ENCODE measurements at regions of chr1 and their contacts with region 1.

Region 1: DNA sequence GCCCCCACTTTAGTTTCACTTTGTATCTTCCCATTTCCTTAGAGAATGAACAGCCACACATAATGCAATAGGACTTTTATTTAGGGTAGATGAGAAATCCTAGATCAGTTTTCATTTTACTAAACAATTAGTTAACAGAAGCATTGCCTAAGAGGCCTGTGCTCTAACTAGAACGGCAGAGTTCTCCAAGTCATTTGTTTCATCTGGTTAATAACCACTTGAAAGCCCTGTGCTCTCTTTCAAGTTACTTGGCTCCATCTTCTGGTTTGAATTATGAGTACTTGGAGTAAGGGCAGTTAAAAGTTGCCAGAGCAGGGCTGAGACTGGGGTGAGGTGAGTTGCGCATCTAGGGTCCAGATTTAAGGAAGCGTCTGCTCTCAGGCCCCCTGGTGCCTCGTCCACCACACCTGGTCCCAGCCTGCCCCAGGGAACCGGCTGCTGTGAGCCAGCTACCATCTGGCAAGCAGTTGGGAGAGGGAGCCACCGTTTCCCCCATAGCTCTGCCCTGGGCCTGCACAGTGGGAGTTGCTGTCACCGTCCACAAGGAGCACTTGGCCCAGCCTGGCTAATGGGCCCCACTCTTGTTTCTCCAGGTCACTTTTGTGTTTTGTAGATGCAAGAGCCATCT is 18.1 kb upstream of the SLC44A3 start:
- DNase-seq: peak; percentile 45
- CTCF ChIP-seq: peak; percentile 56

Region 2: DNA sequence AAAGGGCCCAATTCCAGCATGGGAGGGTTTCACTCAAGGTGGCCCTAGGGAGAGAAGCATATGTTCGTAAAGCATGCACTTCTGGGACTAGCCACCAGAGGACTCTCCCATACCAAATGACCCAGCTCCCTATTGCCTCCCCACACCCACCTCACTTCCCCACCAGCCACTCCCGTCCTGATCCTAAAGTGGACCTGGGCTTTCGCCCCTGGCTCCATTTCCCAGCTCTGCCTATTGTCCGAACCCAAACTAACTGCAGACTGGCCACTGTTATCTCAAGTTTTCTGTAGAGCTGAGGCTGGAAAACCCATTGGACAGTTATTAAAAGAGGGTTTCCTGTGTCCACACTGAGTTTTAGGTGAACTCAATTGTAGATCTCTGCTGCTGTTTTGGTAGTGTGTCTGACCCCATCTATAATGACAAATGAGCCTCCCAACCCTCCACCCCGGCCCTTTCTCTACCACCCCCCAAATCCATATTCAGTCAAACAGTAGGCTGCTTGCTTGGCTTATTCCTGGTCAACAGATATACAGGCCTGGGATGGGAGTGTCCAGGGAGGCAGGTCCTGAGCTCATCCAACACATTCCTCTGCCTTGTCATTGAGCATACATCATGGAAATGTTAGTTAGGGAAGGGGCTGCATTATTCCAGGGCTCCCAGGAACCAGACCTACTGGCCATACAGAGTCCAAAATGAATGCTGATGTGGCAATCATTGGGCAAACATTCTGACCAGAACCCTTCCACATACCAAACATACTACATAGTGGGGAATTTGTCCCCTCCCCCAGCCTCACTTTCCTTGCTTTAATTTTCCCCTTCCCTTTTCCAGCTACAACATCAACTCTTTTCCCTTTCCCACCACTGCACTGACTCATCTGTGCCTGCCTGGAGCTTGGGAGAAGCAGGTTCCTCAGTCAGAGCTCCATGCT is 740.3 kb before region 1 on chr1:
- in situ Hi-C with region 1: loop called (anchors 25 kb)
- DNase-seq: peak; percentile 68
- CTCF ChIP-seq: peak; percentile 84

Region 3: DNA sequence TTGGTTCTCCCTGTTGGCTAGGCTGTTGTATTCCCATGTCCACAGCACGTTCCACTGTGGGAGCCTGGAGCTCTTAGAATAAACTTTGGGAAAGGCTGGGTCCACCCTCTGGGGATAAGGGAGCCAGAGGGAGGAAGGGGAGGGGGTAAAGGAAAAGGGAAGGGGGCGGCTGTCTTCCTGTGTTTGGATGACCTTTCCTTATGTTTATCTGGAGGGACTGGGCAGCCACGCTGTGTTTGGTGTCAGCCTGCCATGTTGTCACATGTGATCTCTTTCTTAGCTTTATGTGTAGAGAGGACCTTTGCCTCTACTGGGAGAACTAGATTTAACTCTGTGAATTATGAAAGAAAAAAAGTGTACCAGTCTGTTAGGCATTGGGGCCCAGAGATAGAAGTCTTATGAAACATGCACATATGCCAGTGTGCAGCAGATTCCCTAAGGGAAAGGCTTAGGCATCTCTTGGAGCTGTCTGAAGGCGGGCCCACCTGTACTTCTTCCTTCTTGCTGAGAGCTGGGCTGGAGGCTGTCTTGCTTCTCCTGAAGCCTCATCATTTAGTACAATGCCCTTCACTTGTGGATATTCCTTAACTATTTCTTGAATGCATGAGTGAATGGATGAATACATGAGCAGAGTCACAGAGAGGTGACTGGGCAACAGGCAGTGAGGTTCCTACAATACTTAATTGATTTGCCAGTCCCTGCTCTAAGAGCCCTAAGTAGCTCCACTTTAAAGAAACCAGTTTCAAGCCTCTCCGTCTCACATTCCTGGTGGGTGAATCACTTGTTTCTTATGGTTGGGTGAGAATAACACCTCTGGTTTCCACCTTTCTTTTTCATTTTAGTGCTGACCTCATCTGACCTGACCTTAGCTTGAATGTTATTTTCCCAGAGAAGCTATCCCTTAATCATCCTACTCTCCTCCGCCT is 502.1 kb before region 1 on chr1:
- in situ Hi-C with region 1: no loop called
- DNase-seq: no peak
- CTCF ChIP-seq: no peak

Region 4: GRCh38 chr1:94335950-94336349 is 466.1 kb before region 1 on chr1:
- in situ Hi-C with region 1: loop called (anchors 25 kb)
- DNase-seq: peak; percentile 34
- CTCF ChIP-seq: peak; percentile 78

Region 5: GRCh38 chr1:94471271-94471670 is 330.8 kb before region 1 on chr1:
- in situ Hi-C with region 1: loop called (anchors 10 kb)
- DNase-seq: no peak
- CTCF ChIP-seq: no peak

Region 6: DNA sequence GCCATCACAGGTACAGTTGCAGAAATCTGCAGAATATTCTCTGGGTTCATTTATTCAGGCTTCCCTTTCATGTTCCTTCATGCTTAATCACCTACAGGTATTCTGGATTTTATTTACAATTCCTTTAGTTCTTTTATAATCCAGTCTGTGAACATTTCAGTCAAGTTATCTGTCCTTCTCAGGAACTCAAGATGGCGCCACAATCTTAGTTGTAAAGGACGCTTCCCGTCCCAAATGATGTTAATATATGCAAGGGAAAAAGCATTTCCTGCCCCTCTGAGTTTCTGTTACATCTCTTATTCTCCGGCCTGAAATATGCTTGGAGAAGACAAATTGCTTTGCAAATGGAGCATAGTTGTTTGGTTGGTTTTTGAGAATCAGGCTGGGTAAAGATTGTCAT is 279.7 kb before region 1 on chr1:
- in situ Hi-C with region 1: loop called (anchors 10 kb)
- DNase-seq: no peak
- CTCF ChIP-seq: peak; percentile 40